Common myeloid progenitor, CD34-positive (primary cell): ENCODE measurements at regions of chr3 and their contacts with region 1.

Region 1: GRCh38 chr3:194671900-194672808 is at the start of gene LSG1:
- DNase-seq: peak; percentile 97 to 99 (median 98)
- H3K4me3 ChIP-seq: peak within 1 kb of the TSS; percentile 79 to 100 (median 97)
- H3K27ac ChIP-seq: peak within 1 kb of the TSS; percentile 100
- H3K4me1 ChIP-seq: peaks cover 11 to 22% (median 17%) of the 10 kb centered on the region in 4 experiments
- H3K27me3 ChIP-seq: peaks cover 0 to 2% (median 0%) of the 10 kb centered on the region in 5 experiments

Region 2: GRCh38 chr3:194344012-194344411 is 328.1 kb before region 1 on chr3:
- CTCF ChIA-PET with region 1: no interaction called
- POLR2A ChIA-PET with region 1: no interaction called
- DNase-seq: peak; percentile 59 to 79 (median 73)
- H3K4me3 ChIP-seq: no peak overlapping the region
- H3K27ac ChIP-seq: no peak overlapping the region
- H3K4me1 ChIP-seq: no peaks in the 10 kb centered on the region
- H3K27me3 ChIP-seq: peaks cover 0 to 7% (median 3%) of the 10 kb centered on the region in 5 experiments

Region 3: DNA sequence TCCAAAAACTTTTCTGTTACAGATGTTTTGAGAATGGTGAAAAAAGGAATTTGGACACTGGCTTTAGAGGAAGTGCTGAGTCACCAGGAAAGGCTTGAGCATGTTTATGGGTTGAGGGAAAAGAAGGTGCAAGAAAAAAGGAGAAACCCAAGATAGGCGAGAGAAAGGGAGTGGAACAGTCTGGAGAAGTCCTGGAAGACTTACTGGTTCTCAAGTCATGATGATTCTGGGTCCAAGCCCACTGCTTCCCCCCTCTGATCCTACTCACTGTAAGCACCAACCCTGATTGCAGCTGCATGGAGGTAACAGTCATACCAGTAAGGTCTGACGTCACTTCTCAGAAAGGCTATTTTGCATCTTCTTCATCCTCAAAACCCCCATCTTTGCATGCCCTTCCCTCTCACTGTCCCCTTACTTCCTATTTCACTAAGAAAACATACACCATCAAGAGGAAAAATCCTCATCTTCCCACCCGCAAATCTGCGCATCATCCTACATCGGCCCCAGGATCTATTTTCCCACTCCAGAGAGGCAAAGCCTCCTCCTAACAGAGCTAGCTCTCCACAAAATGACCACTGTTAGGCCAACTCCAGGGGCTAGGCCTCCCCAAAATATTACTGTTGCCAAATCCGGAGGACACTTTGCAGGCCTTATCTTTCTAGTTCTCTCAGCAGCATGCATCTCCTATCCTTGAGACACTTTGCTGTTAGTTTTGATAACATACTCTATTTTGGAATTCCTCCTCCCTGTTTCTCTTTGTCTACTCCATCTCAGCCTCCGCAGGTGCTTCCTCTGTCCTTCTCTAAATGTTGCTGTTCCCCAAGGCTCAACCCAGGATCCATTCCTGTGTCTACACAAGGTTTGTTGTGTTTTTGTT is 182.2 kb before region 1 on chr3:
- CTCF ChIA-PET with region 1: no interaction called
- POLR2A ChIA-PET with region 1: no interaction called
- DNase-seq: no peak
- H3K4me3 ChIP-seq: no peak overlapping the region
- H3K27ac ChIP-seq: no peak overlapping the region
- H3K4me1 ChIP-seq: peaks cover 23 to 60% (median 29%) of the 10 kb centered on the region in 4 experiments
- H3K27me3 ChIP-seq: no peaks in the 10 kb centered on the region

Region 4: DNA sequence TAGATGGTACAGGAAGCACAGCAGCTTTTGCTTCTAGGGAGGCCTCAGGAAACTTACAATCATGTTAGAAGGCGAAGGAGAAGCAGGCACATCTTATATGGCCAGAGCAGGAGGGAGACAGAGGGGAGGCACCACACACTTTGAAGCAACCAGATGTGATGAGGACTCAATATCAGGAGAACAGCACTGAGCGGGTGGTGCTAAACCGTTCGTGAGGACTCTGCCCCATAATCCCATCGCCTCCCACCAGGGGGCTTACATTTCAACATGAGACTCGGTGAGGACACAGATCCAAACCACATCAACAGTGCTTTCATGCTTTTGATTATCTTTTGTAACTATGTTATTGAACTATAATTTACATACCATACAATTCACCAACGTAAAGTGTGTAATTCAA is 31.3 kb before region 1 on chr3:
- CTCF ChIA-PET with region 1: interaction called, 20 read pairs
- POLR2A ChIA-PET with region 1: no interaction called
- DNase-seq: peak; percentile 42 to 61 (median 52)
- H3K4me3 ChIP-seq: no peak overlapping the region
- H3K27ac ChIP-seq: no peak overlapping the region
- H3K4me1 ChIP-seq: peaks cover 0 to 8% (median 5%) of the 10 kb centered on the region in 4 experiments
- H3K27me3 ChIP-seq: no peaks in the 10 kb centered on the region

Region 5: DNA sequence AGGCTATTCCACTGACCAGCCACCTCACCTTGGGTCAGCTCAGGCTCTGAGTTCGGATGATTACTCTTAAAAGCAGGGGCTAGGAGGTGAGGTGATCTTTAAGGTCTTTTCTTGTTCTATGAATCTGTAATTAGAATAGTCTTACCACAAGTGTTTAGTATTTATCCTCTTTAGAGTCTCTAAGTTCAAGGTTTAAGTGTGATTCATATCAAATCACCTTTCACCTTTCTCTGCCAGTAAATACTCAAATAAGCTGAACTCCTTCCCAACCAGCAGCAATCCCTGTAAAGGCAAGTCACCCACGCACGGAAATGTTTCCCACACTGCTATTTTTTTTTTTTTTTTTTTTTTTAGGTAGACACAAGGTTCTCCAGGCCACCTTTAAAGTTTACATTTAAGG is 24.4 kb before region 1 on chr3:
- CTCF ChIA-PET with region 1: interaction called, 20 read pairs
- POLR2A ChIA-PET with region 1: no interaction called
- DNase-seq: no peak
- H3K4me3 ChIP-seq: no peak overlapping the region
- H3K27ac ChIP-seq: no peak overlapping the region
- H3K4me1 ChIP-seq: no peaks in the 10 kb centered on the region
- H3K27me3 ChIP-seq: no peaks in the 10 kb centered on the region

Region 6: DNA sequence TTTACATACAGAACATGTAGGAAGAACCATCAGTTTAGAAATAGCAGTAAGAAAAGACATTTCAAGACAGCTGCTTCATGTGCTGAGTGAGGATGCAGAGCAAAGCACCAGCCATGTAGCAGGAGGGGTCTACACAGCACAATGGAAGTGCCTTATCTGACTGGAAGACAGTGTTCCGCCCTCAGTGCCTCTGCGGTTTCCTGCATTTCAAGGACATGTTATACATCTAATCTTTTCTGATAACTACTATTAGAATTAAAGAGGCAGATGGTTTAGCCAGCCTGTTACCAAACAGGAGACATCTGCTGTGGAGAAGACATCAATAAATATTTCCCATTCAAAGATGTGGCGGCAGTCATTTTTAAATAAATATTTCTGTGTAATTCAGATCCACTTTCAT is 10.8 kb before region 1 on chr3:
- CTCF ChIA-PET with region 1: interaction called, 43 read pairs
- POLR2A ChIA-PET with region 1: interaction called, 4 read pairs
- DNase-seq: peak; percentile 67 to 91 (median 81)
- H3K4me3 ChIP-seq: peak overlapping the region in 4 of 7 experiments; percentile 1 to 50 (median 45)
- H3K27ac ChIP-seq: peak overlapping the region; percentile 34 to 69
- H3K4me1 ChIP-seq: peaks cover 21 to 61% (median 47%) of the 10 kb centered on the region in 4 experiments
- H3K27me3 ChIP-seq: no peaks in the 10 kb centered on the region

Region 7: DNA sequence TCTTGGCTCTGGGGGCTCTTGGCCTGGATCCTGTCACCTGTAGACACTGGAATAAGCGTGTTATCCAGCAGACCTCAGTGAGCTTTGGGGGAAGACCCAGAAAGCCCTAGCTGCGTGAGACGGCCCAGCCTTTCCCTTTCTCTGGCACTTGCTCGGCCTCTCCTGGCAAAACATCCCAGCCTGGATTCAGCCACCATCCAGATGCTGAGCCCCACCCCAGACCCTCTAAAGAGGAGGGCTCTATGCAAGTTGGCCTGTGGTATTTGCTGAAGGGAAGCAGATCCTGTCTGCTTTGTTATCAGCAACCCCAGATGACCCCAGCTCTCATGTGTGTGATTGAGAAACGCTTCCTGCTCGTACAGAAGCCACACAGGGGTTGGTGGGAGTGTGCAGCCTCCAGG is 280.7 kb after region 1 on chr3:
- CTCF ChIA-PET with region 1: interaction called, 14 read pairs
- POLR2A ChIA-PET with region 1: interaction called, 4 read pairs
- DNase-seq: peak; percentile 73 to 95 (median 91)
- H3K4me3 ChIP-seq: no peak overlapping the region
- H3K27ac ChIP-seq: no peak overlapping the region
- H3K4me1 ChIP-seq: peaks cover 0 to 22% (median 21%) of the 10 kb centered on the region in 4 experiments
- H3K27me3 ChIP-seq: no peaks in the 10 kb centered on the region

Region 8: GRCh38 chr3:195059006-195059350 is 386.8 kb after region 1 on chr3:
- CTCF ChIA-PET with region 1: no interaction called
- POLR2A ChIA-PET with region 1: no interaction called
- DNase-seq: peak in 2 of 3 donors; percentile 21 to 41
- H3K4me3 ChIP-seq: peak overlapping the region in 1 of 7 experiments; percentile 19
- H3K27ac ChIP-seq: no peak overlapping the region
- H3K4me1 ChIP-seq: peaks cover 0 to 25% (median 12%) of the 10 kb centered on the region in 4 experiments
- H3K27me3 ChIP-seq: no peaks in the 10 kb centered on the region